ENCODE measurements at regions of chr7 and their contacts with region 1.

Region 1: DNA sequence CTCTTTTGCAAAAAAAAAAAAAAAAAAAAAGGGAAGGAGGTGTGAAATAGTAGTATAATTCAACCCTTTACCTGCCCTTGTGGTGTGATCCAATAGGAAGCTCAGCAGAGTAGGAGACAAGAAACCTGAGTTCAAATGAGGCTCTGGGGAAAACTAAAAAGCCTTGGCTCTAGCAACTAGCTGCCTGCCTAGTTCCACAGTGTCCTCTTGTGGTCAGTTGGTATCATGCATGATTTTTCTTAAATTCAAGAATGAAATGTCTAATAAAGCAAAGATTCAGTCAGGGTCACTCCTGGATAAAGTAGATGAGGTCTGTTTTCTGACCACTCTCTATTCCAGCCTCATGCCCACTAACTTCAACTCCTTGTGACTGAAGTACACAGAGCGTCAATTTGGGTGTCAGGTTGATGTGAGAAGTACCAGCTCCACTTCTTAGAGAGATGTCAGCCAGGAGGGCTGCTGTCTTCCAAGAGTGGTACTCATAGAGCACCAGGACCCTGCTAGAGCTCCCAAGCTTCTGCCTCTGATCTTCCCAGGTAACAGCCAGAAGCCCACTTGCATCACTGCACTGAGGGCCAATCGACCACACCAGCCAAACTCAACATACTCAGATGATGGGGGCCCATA is 10.5 kb downstream of the LSM5 start:
- DNase-seq: peak; percentile 49
- ATAC-seq: peak; percentile 71
- H3K4me3 ChIP-seq: no peak overlapping the region
- H3K27ac ChIP-seq: no peak overlapping the region
- H3K4me1 ChIP-seq: no peaks in the 10 kb centered on the region
- H3K27me3 ChIP-seq: no peaks in the 10 kb centered on the region
- CTCF ChIP-seq: peak; percentile 79 to 92 (median 91)
- POLR2A ChIP-seq: no peak
- RAD21 ChIP-seq: peak; percentile 94

Region 2: GRCh38 chr7:32212321-32212720 is 267.4 kb before region 1 on chr7:
- CTCF ChIA-PET with region 1: interaction called, 47 read pairs
- POLR2A ChIA-PET with region 1: interaction called, 3 read pairs
- RAD21 ChIA-PET with region 1: interaction called, 5 read pairs
- intact Hi-C with region 1: loop called (anchors 1 kb)
- DNase-seq: no peak
- ATAC-seq: no peak
- H3K4me3 ChIP-seq: no peak overlapping the region
- H3K27ac ChIP-seq: no peak overlapping the region
- H3K4me1 ChIP-seq: no peaks in the 10 kb centered on the region
- H3K27me3 ChIP-seq: peaks cover 54% of the 10 kb centered on the region
- CTCF ChIP-seq: no peak
- POLR2A ChIP-seq: no peak
- RAD21 ChIP-seq: no peak

Region 3: DNA sequence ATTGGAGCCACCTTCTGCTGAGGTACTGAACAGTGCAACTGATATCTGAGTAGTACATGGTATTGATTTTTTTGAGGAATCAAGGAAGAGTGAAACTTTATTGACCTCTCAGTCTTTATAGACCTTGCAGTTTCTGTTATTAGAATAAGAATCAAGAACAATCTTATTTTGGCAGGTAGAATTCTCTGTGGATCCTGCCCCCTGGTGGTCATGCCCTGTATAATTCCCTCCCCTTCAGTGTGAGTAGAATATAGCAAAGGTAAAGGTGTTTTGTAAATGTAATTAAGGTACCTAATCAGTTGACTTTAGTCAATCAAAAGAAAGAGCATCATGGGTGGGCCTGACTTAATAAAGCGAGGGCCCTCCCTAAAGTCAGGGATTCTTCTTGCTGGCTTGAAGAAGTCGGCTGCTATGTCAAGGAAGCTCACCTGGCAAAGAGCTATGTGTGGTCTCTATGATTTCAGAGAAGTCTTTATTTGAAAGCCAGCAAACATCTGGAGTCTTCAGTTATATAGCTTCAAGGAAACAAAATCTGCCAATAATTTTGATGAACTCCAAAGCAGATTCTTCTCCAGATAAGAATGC is 132.4 kb before region 1 on chr7:
- CTCF ChIA-PET with region 1: no interaction called
- POLR2A ChIA-PET with region 1: no interaction called
- RAD21 ChIA-PET with region 1: no interaction called
- intact Hi-C with region 1: loop called (anchors 5 kb)
- DNase-seq: peak; percentile 19
- ATAC-seq: peak; percentile 71; the same call in 1 of the 2 replicates
- H3K4me3 ChIP-seq: no peak overlapping the region
- H3K27ac ChIP-seq: no peak overlapping the region
- H3K4me1 ChIP-seq: no peaks in the 10 kb centered on the region
- H3K27me3 ChIP-seq: no peaks in the 10 kb centered on the region
- CTCF ChIP-seq: peak; percentile 48 to 87 (median 71); a peak in 5 of 6 replicates
- POLR2A ChIP-seq: no peak
- RAD21 ChIP-seq: peak; percentile 49

Region 4: GRCh38 chr7:32364581-32364980 is 115.1 kb before region 1 on chr7:
- CTCF ChIA-PET with region 1: no interaction called
- POLR2A ChIA-PET with region 1: no interaction called
- RAD21 ChIA-PET with region 1: no interaction called
- intact Hi-C with region 1: no loop called
- DNase-seq: no peak
- ATAC-seq: no peak
- H3K4me3 ChIP-seq: no peak overlapping the region
- H3K27ac ChIP-seq: no peak overlapping the region
- H3K4me1 ChIP-seq: no peaks in the 10 kb centered on the region
- H3K27me3 ChIP-seq: peaks cover 67% of the 10 kb centered on the region
- CTCF ChIP-seq: no peak
- POLR2A ChIP-seq: no peak
- RAD21 ChIP-seq: no peak

Measured in HCT116 (cell line).